BJ (cell line): ENCODE measurements at regions of chr1 and their contacts with region 1.

Region 1: DNA sequence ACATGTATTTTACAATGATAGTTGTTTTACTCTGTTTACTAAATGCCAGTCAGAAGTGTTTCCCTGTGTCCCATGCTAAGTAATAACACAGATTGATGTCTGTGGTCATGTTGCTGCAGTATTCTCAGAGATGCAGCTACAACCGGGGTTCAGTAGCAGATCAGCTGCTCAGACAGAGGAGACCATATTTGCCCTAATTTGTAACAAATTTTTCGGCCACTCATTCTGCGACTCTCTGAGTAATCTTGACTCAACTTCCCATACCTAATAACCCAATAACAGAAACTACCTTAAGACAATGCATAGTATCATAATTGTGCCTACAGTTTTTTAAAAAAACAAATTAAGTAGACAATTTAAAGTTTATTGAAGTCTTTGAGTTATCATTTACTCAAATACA is 32.6 kb downstream of the NIBAN1 start:
- DNase-seq: no peak
- H3K4me3 ChIP-seq: no peak overlapping the region
- H3K27me3 ChIP-seq: no peaks in the 10 kb centered on the region
- CTCF ChIP-seq: no peak

Region 2: DNA sequence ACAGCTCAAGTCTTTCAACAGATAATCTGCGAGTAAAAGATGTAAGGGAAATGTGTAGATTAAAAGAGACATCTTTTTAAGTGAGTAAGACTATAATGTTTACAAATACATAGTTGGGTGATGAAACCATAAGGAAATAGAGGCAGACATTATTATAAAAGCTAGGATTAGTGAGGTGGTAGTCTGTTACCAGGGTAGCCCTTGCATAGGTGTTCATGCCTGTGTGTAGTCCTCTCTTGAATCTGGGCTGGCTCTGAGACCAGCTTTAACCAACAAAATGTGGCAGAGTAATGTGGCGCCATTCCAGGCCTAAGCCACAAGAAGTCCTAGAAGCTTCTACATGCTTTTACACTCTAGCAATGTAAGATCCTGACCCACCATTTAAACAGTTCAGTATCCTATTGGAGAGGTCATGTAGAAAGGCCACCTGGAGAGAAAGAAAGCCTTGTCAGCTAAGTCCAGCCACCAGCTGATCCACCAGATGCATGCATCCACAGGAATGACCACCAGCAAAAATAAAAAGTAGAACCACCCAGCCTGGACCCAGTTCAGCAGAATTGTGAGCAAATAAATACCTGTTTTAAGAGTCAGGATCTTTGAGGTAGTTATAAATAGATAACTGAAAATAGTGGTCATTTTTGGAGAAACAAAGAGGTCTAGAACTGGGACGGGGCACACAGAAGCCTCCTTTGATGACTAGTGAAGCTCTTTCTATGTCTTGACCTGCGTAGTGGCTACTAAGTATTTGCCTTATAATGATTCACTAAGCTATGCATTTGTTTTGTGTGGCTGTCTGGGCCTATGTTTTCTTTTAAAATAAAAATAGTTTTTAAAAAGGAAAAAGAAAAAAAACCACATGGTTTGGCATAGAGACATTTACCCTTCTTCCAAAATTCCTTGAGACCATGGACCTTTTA is 24.5 kb after region 1 on chr1:
- CTCF ChIA-PET with region 1: interaction called, 3 read pairs
- POLR2A ChIA-PET with region 1: interaction called, 14 read pairs
- DNase-seq: no peak
- H3K4me3 ChIP-seq: no peak overlapping the region
- H3K27me3 ChIP-seq: no peaks in the 10 kb centered on the region
- CTCF ChIP-seq: no peak